ENCODE measurements at regions of chr11 and their contacts with region 1.

Region 1: GRCh38 chr11:102940714-102941588 is 14.6 kb downstream of the MMP13 start:
- DNase-seq: peak; percentile 22
- H3K4me3 ChIP-seq: no peak overlapping the region
- H3K27me3 ChIP-seq: no peaks in the 10 kb centered on the region
- CTCF ChIP-seq: peak; percentile 70

Region 2: GRCh38 chr11:102733232-102733875 is 207.6 kb before region 1 on chr11:
- CTCF ChIA-PET with region 1: interaction called, 13 read pairs
- POLR2A ChIA-PET with region 1: no interaction called
- DNase-seq: no peak
- H3K4me3 ChIP-seq: no peak overlapping the region
- H3K27me3 ChIP-seq: no peaks in the 10 kb centered on the region
- CTCF ChIP-seq: peak; percentile 88

Region 3: DNA sequence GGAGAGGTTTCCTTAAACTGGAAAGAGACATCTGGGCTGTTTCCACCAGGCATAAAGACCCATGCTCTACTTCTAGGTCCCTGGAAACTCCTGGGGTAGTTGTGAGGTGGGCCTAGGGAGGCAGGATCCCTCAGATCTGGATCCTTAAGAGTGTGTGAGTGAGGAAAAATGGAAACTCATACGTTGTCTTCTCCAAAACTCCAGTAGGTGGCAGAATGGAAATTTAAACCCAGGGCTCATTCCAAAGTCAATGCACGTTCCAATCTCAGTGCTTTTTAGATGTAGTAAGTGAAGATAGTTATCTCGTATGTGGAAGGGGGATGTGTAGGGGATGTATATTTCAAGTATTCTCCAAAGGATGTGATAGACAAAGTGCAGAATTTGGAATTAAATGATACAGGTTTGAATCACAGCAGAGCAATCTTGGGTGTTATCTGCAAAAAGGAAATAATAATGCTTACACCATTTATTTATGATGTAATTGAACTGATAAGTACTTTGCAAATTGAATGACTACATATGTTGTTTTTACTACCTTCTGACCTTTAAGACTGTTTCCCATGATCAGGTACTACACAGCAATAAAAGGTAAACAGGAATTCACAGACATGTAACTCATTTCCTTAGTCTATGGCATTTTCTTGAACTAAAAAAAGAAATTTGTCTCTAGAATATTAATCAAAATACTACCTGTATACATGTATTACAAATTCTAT is 129.8 kb before region 1 on chr11:
- CTCF ChIA-PET with region 1: interaction called, 25 read pairs
- POLR2A ChIA-PET with region 1: no interaction called
- DNase-seq: no peak
- H3K4me3 ChIP-seq: no peak overlapping the region
- H3K27me3 ChIP-seq: no peaks in the 10 kb centered on the region
- CTCF ChIP-seq: peak; percentile 70

Region 4: GRCh38 chr11:102831489-102832440 is 109.2 kb before region 1 on chr11:
- CTCF ChIA-PET with region 1: interaction called, 65 read pairs
- POLR2A ChIA-PET with region 1: no interaction called
- DNase-seq: no peak
- H3K4me3 ChIP-seq: peak overlapping the region; percentile 43
- H3K27me3 ChIP-seq: no peaks in the 10 kb centered on the region
- CTCF ChIP-seq: peak; percentile 83

Region 5: DNA sequence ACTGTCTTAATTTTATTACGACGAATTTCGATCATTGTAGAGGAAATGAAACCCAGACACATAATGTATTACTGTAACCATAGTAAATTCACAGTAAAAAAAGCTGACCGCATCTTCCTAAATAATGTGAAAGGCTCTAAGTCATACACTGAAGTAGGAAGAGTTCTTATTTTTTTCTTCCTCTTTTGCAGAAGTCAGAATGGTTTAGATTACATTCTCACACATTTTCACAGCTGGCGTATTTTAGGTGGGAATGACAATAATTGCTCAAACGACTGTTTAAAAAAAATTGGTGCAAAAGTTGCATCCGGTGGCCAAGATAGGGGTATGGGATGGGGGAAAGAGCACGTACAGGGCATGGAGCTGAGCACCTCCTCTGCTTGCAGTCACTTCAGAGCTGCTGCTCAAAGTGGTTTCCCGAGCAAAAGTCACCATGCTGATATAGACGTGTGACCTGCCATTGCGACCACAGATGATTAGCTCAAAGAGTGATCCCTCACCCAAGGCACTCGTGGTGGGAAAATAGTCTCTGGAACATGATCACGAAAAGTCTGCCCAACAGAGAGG is 20.8 kb before region 1 on chr11:
- CTCF ChIA-PET with region 1: interaction called, 52 read pairs
- POLR2A ChIA-PET with region 1: no interaction called
- DNase-seq: peak; percentile 30
- H3K4me3 ChIP-seq: no peak overlapping the region
- H3K27me3 ChIP-seq: no peaks in the 10 kb centered on the region
- CTCF ChIP-seq: no peak

Region 6: GRCh38 chr11:102929972-102930371 is 11.0 kb before region 1 on chr11:
- CTCF ChIA-PET with region 1: interaction called, 19 read pairs
- POLR2A ChIA-PET with region 1: no interaction called
- DNase-seq: no peak
- H3K4me3 ChIP-seq: no peak overlapping the region
- H3K27me3 ChIP-seq: no peaks in the 10 kb centered on the region; the same call in 1 of the 2 replicates
- CTCF ChIP-seq: no peak